Activated CD8-positive, alpha-beta T cell treated with anti-CD3 and anti-CD28 coated beads for 36 hours (primary cell): ENCODE measurements at regions of chr2 and their contacts with region 1.

Region 1: DNA sequence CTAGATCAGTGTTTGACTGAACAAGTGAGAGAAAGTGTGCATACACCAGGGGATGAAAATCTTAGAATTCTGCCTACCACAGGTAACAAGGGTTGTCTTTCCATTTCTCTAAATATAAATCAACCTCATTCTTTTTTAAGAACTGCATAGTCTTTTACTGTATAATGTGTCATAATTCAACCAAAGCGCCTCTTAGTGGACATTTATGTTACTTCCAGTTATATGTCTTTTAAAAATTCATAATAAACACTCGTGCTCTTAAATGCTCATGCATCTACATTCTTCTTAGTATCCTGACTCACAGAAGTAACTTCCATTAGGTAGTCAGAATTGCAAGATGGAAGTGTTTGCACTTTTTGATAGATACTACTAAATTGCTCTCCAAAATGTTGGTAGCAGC is 76.2 kb downstream of the CHRNA1 start:
- DNase-seq: no peak
- ATAC-seq: peak; percentile 69
- H3K4me3 Mint-ChIP-seq: no peak overlapping the region
- H3K27ac Mint-ChIP-seq: no peak overlapping the region
- H3K4me1 Mint-ChIP-seq: peaks cover 42% of the 10 kb centered on the region
- H3K27me3 Mint-ChIP-seq: peaks cover 1% of the 10 kb centered on the region
- CTCF ChIP-seq: peak; percentile 73

Region 2: GRCh38 chr2:174561283-174561971 is 126.7 kb before region 1 on chr2:
- CTCF ChIA-PET with region 1: interaction called, 10 read pairs
- POLR2A ChIA-PET with region 1: no interaction called
- intact Hi-C with region 1: no loop called
- DNase-seq: no peak
- ATAC-seq: no peak
- H3K4me3 Mint-ChIP-seq: no peak overlapping the region
- H3K27ac Mint-ChIP-seq: peak overlapping the region; percentile 47
- H3K4me1 Mint-ChIP-seq: peaks cover 18% of the 10 kb centered on the region
- H3K27me3 Mint-ChIP-seq: no peaks in the 10 kb centered on the region
- CTCF ChIP-seq: no peak

Region 3: DNA sequence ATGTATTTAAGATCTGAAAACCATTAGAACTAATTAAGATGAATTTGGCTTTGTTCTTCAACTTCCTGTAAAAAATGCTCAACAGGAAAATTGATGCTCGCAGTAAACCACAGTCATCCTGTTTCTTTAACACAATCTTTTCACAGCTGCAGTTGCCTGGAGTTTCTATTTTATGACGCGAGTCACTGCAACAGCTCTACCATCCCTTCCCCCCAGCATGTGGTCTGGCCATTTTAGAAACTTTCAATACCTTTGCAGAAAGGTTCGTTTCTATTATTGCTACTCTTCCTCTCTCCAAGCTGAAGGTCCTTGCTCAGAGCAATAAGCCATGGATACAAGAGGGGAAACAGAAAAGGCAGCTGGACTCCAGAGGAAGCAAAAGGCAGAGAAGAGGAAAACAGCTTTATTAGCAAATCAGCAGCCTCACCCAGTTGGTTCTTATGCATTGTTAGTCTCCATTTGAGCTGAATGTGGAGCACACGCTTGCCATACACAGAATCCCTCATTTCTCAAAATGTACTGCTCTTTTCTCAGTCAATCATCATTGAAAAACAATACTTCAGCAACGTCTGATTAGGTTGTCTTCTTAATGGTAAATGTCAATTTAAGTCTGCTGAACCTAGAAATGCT is 94.4 kb before region 1 on chr2:
- CTCF ChIA-PET with region 1: interaction called, 70 read pairs
- POLR2A ChIA-PET with region 1: interaction called, 43 read pairs
- intact Hi-C with region 1: loop called (anchors 5 kb)
- DNase-seq: peak; percentile 88
- ATAC-seq: peak; percentile 71
- H3K4me3 Mint-ChIP-seq: peak overlapping the region; percentile 87
- H3K27ac Mint-ChIP-seq: peak overlapping the region; percentile 99
- H3K4me1 Mint-ChIP-seq: peaks cover 40% of the 10 kb centered on the region
- H3K27me3 Mint-ChIP-seq: no peaks in the 10 kb centered on the region
- CTCF ChIP-seq: no peak

Region 4: GRCh38 chr2:174615871-174616436 is 72.1 kb before region 1 on chr2:
- CTCF ChIA-PET with region 1: interaction called, 28 read pairs
- POLR2A ChIA-PET with region 1: interaction called, 5 read pairs
- intact Hi-C with region 1: no loop called
- DNase-seq: no peak
- ATAC-seq: peak; percentile 41
- H3K4me3 Mint-ChIP-seq: peak overlapping the region; percentile 11
- H3K27ac Mint-ChIP-seq: peak overlapping the region; percentile 93
- H3K4me1 Mint-ChIP-seq: peaks cover 86% of the 10 kb centered on the region
- H3K27me3 Mint-ChIP-seq: no peaks in the 10 kb centered on the region
- CTCF ChIP-seq: no peak

Region 5: GRCh38 chr2:174644401-174644800 is 43.7 kb before region 1 on chr2:
- CTCF ChIA-PET with region 1: interaction called, 10 read pairs
- POLR2A ChIA-PET with region 1: interaction called, 5 read pairs
- intact Hi-C with region 1: no loop called
- DNase-seq: no peak
- ATAC-seq: no peak
- H3K4me3 Mint-ChIP-seq: no peak overlapping the region
- H3K27ac Mint-ChIP-seq: no peak overlapping the region
- H3K4me1 Mint-ChIP-seq: peaks cover 14% of the 10 kb centered on the region
- H3K27me3 Mint-ChIP-seq: no peaks in the 10 kb centered on the region
- CTCF ChIP-seq: no peak